ENCODE measurements at regions of chr1 and their contacts with region 1.

Region 1: DNA sequence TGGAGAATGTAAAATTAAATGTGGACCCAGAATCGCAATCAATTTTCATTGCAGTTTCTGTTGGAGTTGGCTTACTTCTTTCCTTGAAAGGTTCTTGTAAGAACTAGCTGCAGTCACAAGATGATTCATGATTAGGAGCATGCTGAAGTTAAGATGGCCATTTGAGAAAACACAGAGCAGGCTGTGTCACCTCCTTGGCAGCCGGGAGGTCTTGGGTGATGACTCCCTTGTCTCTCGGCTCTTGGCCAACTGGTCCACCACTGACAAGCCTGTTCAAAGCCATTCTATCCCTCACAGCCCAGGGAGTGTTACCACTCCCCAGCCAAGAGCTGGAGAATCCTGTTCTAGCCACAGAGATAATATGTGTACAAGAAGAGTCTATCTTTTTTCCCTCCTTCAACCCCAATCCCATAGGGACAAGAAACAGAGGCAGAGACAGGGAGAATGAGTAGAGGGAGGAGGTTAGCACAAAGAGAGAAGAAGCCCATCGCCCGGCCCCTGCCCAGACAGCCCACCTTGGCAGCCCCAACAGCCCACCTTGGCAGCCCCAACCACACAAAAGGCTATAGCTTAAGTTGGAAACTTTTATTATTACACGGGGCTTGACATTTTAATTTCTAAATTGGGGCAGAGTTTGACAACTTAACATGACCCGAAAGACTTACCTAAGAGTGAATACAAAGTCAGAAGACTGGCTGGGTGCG is 40.7 kb downstream of the OPTC start:
- DNase-seq: peak; percentile 95
- H3K4me3 Mint-ChIP-seq: peak overlapping the region; percentile 35
- H3K27ac Mint-ChIP-seq: peak overlapping the region; percentile 58
- H3K4me1 Mint-ChIP-seq: peaks cover 36% of the 10 kb centered on the region
- H3K27me3 Mint-ChIP-seq: no peaks in the 10 kb centered on the region
- CTCF ChIP-seq: no peak

Region 2: GRCh38 chr1:203450479-203451149 is 84.1 kb before region 1 on chr1:
- CTCF ChIA-PET with region 1: no interaction called
- POLR2A ChIA-PET with region 1: no interaction called
- intact Hi-C with region 1: no loop called
- DNase-seq: no peak
- H3K4me3 Mint-ChIP-seq: no peak overlapping the region
- H3K27ac Mint-ChIP-seq: no peak overlapping the region
- H3K4me1 Mint-ChIP-seq: no peaks in the 10 kb centered on the region
- H3K27me3 Mint-ChIP-seq: peaks cover 93% of the 10 kb centered on the region
- CTCF ChIP-seq: no peak

Region 3: GRCh38 chr1:203463469-203464062 is 71.1 kb before region 1 on chr1:
- CTCF ChIA-PET with region 1: no interaction called
- POLR2A ChIA-PET with region 1: no interaction called
- intact Hi-C with region 1: no loop called
- DNase-seq: no peak
- H3K4me3 Mint-ChIP-seq: no peak overlapping the region
- H3K27ac Mint-ChIP-seq: no peak overlapping the region
- H3K4me1 Mint-ChIP-seq: peaks cover 28% of the 10 kb centered on the region
- H3K27me3 Mint-ChIP-seq: peaks cover 35% of the 10 kb centered on the region
- CTCF ChIP-seq: no peak

Region 4: GRCh38 chr1:203475012-203475981 is 59.4 kb before region 1 on chr1 and contains the start of gene PRELP:
- CTCF ChIA-PET with region 1: no interaction called
- POLR2A ChIA-PET with region 1: no interaction called
- intact Hi-C with region 1: no loop called
- DNase-seq: peak; percentile 25
- H3K4me3 Mint-ChIP-seq: no peak within 1 kb of the TSS
- H3K27ac Mint-ChIP-seq: no peak within 1 kb of the TSS
- H3K4me1 Mint-ChIP-seq: peaks cover 9% of the 10 kb centered on the region
- H3K27me3 Mint-ChIP-seq: peaks cover 55% of the 10 kb centered on the region
- CTCF ChIP-seq: no peak
- total RNA-seq, gene PRELP: not detected in 2 replicates

Region 5: DNA sequence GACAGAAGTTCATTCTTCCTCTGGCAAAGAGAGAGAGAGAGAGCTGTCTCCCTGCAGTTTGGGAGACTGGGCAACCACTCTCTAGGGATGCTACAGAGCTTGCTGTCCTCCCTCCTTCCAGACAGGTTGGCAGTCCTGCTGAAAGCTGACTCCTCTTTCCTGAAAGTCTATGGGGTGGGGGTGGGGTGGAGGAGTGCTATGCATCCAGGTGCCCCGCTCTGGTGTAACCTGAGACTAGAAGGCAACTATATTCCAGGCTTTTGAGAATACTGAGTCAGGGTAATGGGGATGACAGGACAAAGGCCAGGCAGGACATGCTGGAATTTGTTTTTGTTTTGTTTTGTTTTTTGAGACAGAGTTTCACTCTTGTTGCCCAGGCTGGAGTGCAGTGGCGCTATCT is 14.6 kb after region 1 on chr1:
- CTCF ChIA-PET with region 1: interaction called, 3 read pairs
- POLR2A ChIA-PET with region 1: interaction called, 16 read pairs
- intact Hi-C with region 1: no loop called
- DNase-seq: peak; percentile 87
- H3K4me3 Mint-ChIP-seq: no peak overlapping the region
- H3K27ac Mint-ChIP-seq: no peak overlapping the region
- H3K4me1 Mint-ChIP-seq: peaks cover 11% of the 10 kb centered on the region
- H3K27me3 Mint-ChIP-seq: no peaks in the 10 kb centered on the region
- CTCF ChIP-seq: no peak

Region 6: DNA sequence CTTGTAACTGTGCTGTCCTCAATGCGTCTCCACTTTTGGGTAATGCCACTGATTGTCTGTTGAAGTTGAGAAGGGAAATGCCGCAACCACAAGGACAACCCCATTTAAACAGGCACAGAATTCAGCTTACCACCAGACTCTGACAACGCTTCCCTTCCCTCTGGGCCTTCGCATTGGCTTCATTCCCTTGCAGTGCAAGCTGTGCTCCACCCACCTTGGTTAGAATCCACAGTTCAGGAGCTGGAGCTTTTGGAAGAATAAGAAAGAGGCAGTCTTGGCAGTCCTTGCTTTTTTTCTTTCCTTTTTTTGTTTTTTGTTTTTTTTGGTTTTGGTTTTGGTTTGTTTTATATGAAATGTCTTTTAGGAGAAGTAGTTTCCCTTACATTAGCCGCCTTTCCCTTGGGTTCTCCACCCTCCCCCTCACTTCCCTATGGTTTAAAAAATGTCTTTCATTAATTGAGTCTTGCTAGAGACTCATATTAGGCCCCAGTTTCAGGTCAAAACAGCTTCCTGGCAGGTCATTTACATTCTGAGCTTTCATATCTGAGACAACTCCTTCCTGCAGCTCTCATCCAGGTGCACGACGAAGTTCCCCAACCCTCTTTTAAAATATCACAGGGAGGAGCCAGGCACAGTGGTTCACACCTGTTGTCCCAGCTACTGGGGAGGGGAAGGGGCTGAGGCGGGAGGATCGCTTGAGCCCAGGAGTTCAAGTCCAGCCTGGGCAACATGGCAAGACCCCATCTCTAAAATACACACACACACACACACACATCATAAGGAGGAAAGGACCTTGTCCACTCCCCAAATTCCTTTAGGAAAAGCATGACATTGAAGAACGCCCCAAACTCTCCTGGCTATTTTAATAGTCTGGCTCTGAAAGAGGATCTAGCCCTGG is 209.6 kb after region 1 on chr1:
- CTCF ChIA-PET with region 1: no interaction called
- POLR2A ChIA-PET with region 1: no interaction called
- intact Hi-C with region 1: no loop called
- DNase-seq: no peak
- H3K4me3 Mint-ChIP-seq: no peak overlapping the region
- H3K27ac Mint-ChIP-seq: no peak overlapping the region
- H3K4me1 Mint-ChIP-seq: no peaks in the 10 kb centered on the region
- H3K27me3 Mint-ChIP-seq: no peaks in the 10 kb centered on the region
- CTCF ChIP-seq: no peak